ENCODE measurements at regions of chr15 and their contacts with region 1.

Region 1: GRCh38 chr15:85730001-85730820 is 64.5 kb downstream of the KLHL25 start:
- DNase-seq: peak; percentile 49
- H3K4me3 Mint-ChIP-seq: no peak overlapping the region
- H3K27ac Mint-ChIP-seq: peak overlapping the region; percentile 56
- H3K4me1 Mint-ChIP-seq: peaks cover 6% of the 10 kb centered on the region
- H3K27me3 Mint-ChIP-seq: no peaks in the 10 kb centered on the region

Region 2: GRCh38 chr15:84638103-84638502 is 1092.1 kb before region 1 on chr15:
- CTCF ChIA-PET with region 1: no interaction called
- DNase-seq: no peak
- H3K4me3 Mint-ChIP-seq: no peak overlapping the region
- H3K27ac Mint-ChIP-seq: peak overlapping the region; percentile 1
- H3K4me1 Mint-ChIP-seq: peaks cover 26% of the 10 kb centered on the region
- H3K27me3 Mint-ChIP-seq: no peaks in the 10 kb centered on the region

Region 3: GRCh38 chr15:84961114-84961452 is 769.1 kb before region 1 on chr15:
- CTCF ChIA-PET with region 1: no interaction called
- DNase-seq: no peak
- H3K4me3 Mint-ChIP-seq: no peak overlapping the region
- H3K27ac Mint-ChIP-seq: no peak overlapping the region
- H3K4me1 Mint-ChIP-seq: peaks cover 4% of the 10 kb centered on the region
- H3K27me3 Mint-ChIP-seq: peaks cover 22% of the 10 kb centered on the region

Region 4: GRCh38 chr15:85611363-85611762 is 118.8 kb before region 1 on chr15:
- CTCF ChIA-PET with region 1: no interaction called
- DNase-seq: no peak
- H3K4me3 Mint-ChIP-seq: no peak overlapping the region
- H3K27ac Mint-ChIP-seq: no peak overlapping the region
- H3K4me1 Mint-ChIP-seq: peaks cover 10% of the 10 kb centered on the region
- H3K27me3 Mint-ChIP-seq: no peaks in the 10 kb centered on the region

Region 5: GRCh38 chr15:85742186-85742821 is 12.1 kb after region 1 on chr15:
- CTCF ChIA-PET with region 1: interaction called, 14 read pairs
- DNase-seq: no peak
- H3K4me3 Mint-ChIP-seq: no peak overlapping the region
- H3K27ac Mint-ChIP-seq: no peak overlapping the region
- H3K4me1 Mint-ChIP-seq: no peaks in the 10 kb centered on the region
- H3K27me3 Mint-ChIP-seq: no peaks in the 10 kb centered on the region

Region 6: DNA sequence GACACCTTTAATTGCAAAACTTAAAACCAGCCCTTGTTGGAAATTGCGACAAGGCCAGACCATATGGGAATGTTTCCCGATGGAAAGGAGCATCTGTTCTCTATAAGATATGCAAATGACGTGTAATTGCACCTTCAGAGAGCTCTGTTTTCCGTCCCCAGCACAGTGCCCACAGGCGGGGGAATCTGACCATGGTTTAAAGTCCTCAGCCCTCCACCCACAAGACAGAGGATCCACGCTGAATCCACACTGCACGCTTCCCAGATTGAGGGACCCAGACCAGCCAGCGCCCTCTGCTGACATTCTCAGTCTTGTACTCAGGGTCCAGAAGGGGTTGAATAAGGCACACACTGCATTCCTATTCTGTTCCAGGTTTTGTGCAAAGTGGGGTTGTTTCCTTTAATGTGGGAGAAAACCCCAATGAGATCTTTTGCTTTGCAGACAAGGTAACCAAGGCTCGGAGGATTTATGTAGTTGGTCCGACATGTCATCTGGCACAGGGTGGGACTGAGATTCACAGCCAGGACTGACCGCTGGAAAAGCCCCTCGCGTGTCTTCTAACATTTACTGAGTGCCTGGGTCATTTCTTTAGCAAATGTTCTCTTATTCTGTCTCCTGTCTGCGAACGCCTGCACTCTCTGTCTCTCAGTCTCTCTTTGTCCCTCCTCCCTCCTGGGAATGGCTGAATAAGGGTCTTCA is 101.4 kb after region 1 on chr15:
- CTCF ChIA-PET with region 1: interaction called, 24 read pairs
- DNase-seq: peak; percentile 56
- H3K4me3 Mint-ChIP-seq: no peak overlapping the region
- H3K27ac Mint-ChIP-seq: no peak overlapping the region
- H3K4me1 Mint-ChIP-seq: no peaks in the 10 kb centered on the region
- H3K27me3 Mint-ChIP-seq: peaks cover 30% of the 10 kb centered on the region

Region 7: GRCh38 chr15:85840065-85840801 is 110.0 kb after region 1 on chr15:
- CTCF ChIA-PET with region 1: interaction called, 64 read pairs
- DNase-seq: peak; percentile 82
- H3K4me3 Mint-ChIP-seq: peak overlapping the region; percentile 45
- H3K27ac Mint-ChIP-seq: no peak overlapping the region
- H3K4me1 Mint-ChIP-seq: peaks cover 4% of the 10 kb centered on the region
- H3K27me3 Mint-ChIP-seq: peaks cover 32% of the 10 kb centered on the region

Measured in activated naive CD4-positive, alpha-beta T cell treated with anti-CD3 and anti-CD28 coated beads, Interleukin-2, amount 10 ng/mL, durations not matched to agents 7 days and 5 days (primary cell).